ENCODE measurements at regions of chr2 and their contacts with region 1.

Region 1: GRCh38 chr2:177148477-177149154 is 64.0 kb upstream of the HNRNPA3 start:
- DNase-seq: peak; percentile 96
- H3K4me3 ChIP-seq: peak overlapping the region; percentile 48
- H3K27ac ChIP-seq: peak overlapping the region; percentile 57
- H3K4me1 ChIP-seq: peaks cover 40% of the 10 kb centered on the region
- H3K27me3 ChIP-seq: no peaks in the 10 kb centered on the region
- CTCF ChIP-seq: peak; percentile 95

Region 2: GRCh38 chr2:176554101-176555048 is 594.2 kb before region 1 on chr2:
- CTCF ChIA-PET with region 1: no interaction called
- POLR2A ChIA-PET with region 1: no interaction called
- intact Hi-C with region 1: loop called (anchors 10 kb)
- DNase-seq: peak; percentile 86
- H3K4me3 ChIP-seq: peak overlapping the region; percentile 53
- H3K27ac ChIP-seq: peak overlapping the region; percentile 80
- H3K4me1 ChIP-seq: peaks cover 19% of the 10 kb centered on the region
- H3K27me3 ChIP-seq: no peaks in the 10 kb centered on the region
- CTCF ChIP-seq: peak; percentile 82

Region 3: DNA sequence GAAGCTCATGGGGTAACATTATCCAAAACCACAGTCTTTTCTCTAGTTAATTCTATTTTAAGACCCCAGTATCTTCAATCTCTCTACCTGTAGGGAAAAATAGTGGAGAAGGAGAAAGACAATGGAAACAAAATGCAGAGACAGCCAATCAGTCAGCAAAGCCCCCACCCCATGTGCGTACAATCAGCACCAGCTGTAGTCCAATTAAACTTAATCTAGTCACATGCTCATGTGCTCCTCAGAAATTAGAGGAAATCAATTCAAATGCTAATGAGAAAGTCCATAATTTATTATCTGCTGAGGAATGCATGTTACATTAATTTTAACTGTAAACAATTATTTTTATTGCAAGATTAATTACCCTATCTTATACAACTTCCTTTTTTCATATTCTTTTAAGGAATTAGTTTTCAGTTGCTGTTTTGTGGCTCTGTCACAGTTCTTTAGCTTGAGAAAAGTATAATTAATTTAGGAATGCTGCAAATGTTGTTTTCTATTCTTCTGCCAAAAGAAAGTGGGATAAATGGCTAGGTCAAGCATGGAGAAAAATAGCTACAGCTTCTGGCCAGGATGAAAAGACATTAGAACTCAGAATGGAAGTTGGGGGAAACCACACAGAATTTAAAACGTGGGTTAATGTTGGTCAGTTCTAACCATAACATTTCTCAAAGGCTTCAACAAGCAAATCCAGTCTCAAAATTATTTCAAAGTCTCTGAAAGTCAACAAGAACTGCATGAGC is 168.5 kb before region 1 on chr2:
- CTCF ChIA-PET with region 1: interaction called, 4 read pairs
- POLR2A ChIA-PET with region 1: no interaction called
- intact Hi-C with region 1: loop called (anchors 2 kb)
- DNase-seq: peak; percentile 61
- H3K4me3 ChIP-seq: no peak overlapping the region
- H3K27ac ChIP-seq: no peak overlapping the region
- H3K4me1 ChIP-seq: peaks cover 31% of the 10 kb centered on the region
- H3K27me3 ChIP-seq: peaks cover 32% of the 10 kb centered on the region
- CTCF ChIP-seq: no peak

Measured in A673 (cell line).